ENCODE measurements at regions of chr1 and their contacts with region 1.

Region 1: GRCh38 chr1:64823691-64824476 is 79.0 kb downstream of the RAVER2 start:
- DNase-seq: peak; percentile 47 to 83 (median 52)
- ATAC-seq: peak; percentile 91
- H3K4me3 ChIP-seq: no peak overlapping the region
- H3K27ac ChIP-seq: no peak overlapping the region
- H3K4me1 ChIP-seq: no peaks in the 10 kb centered on the region
- H3K27me3 ChIP-seq: no peaks in the 10 kb centered on the region
- CTCF ChIP-seq: peak; percentile 72 to 95 (median 82)
- EP300 ChIP-seq: no peak
- POLR2A ChIP-seq: no peak
- RAD21 ChIP-seq: peak; percentile 93 to 97

Region 2: DNA sequence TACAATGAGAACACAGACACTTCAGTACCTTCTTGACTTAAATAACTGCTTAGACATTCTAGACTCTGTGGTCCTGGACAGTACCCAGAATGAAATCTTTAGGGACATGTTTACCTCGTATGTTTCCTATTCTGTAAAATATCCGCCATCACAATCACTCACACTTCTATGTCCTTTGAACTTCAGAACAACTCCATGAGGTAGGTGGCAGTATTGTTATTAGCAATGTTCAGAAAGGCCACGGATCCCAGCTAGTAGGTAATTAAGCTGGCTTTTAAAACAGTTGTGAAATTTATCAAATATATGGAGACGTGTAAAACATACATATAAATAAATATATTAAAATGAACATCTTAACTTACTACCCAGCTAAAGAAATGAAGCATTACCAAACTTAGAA is 270.6 kb before region 1 on chr1:
- CTCF ChIA-PET with region 1: no interaction called
- POLR2A ChIA-PET with region 1: no interaction called
- in situ Hi-C with region 1: no loop called
- intact Hi-C with region 1: loop called (anchors 5 kb)
- DNase-seq: peak in 1 of 4 experiments; percentile 3
- ATAC-seq: no peak
- H3K4me3 ChIP-seq: no peak overlapping the region
- H3K27ac ChIP-seq: no peak overlapping the region
- H3K4me1 ChIP-seq: no peaks in the 10 kb centered on the region
- H3K27me3 ChIP-seq: no peaks in the 10 kb centered on the region
- CTCF ChIP-seq: peak in 2 of 3 experiments; percentile 16 to 21; a peak in 1 of 6 replicates
- EP300 ChIP-seq: no peak
- POLR2A ChIP-seq: no peak
- RAD21 ChIP-seq: peak in 1 of 2 experiments; percentile 37; a peak in 1 of 4 replicates

Region 3: DNA sequence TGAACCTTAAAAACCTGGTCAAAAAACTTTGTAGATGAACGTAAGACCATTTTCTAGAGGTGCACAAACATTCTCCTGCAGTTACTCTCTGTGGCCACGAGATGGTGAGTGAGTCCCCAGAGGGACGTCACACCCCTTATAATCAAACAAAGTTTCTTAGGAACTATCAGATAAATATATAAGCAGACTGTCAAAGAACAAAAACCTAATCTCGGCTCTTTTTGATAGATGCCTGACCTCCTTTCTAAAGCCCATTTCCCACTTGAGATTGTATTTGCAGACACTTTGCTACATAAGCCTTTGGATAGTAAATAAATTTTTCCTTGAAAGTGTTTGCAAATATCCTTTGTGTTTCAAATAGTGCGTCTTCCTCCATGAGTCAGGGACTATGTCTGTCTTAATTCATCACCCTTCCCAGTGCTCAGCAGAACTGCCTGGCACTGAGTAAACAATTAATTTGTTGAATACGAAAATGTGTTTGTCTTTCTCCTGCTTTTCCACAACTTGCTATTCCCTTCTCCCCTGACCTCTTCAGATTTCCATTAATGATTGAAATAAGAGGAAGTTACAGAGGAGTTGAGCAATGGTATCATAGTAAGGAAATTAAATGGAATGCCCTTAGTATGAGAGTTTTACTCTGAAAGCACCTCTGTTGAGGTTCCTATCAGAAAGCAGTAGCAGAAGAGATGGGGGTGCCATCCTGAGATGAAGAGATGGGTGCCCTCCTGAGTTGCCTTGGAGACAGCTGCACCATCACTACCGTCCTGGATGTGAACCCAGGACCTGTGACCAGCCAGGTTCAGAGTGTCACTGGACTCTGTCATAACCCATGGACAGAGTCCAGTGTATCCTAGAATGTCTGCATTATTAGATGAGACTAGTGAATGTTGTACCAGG is 136.8 kb before region 1 on chr1:
- CTCF ChIA-PET with region 1: interaction called, 19 read pairs
- POLR2A ChIA-PET with region 1: no interaction called
- in situ Hi-C with region 1: loop called (anchors 10 kb)
- intact Hi-C with region 1: loop called (anchors 1 kb)
- DNase-seq: peak; percentile 55 to 66 (median 61)
- ATAC-seq: peak; percentile 89
- H3K4me3 ChIP-seq: no peak overlapping the region
- H3K27ac ChIP-seq: no peak overlapping the region
- H3K4me1 ChIP-seq: no peaks in the 10 kb centered on the region
- H3K27me3 ChIP-seq: peaks cover 11 to 22% of the 10 kb centered on the region in 2 experiments
- CTCF ChIP-seq: peak; percentile 66 to 85 (median 80)
- EP300 ChIP-seq: no peak
- POLR2A ChIP-seq: no peak
- RAD21 ChIP-seq: peak; percentile 60 to 77

Measured in K562 (cell line).